Activated CD8-positive, alpha-beta T cell treated with anti-CD3 and anti-CD28 coated beads, Interleukin-2, amount 10 ng/mL, durations not matched to agents 7 days and 5 days (primary cell): ENCODE measurements at regions of chr5 and their contacts with region 1.

Region 1: DNA sequence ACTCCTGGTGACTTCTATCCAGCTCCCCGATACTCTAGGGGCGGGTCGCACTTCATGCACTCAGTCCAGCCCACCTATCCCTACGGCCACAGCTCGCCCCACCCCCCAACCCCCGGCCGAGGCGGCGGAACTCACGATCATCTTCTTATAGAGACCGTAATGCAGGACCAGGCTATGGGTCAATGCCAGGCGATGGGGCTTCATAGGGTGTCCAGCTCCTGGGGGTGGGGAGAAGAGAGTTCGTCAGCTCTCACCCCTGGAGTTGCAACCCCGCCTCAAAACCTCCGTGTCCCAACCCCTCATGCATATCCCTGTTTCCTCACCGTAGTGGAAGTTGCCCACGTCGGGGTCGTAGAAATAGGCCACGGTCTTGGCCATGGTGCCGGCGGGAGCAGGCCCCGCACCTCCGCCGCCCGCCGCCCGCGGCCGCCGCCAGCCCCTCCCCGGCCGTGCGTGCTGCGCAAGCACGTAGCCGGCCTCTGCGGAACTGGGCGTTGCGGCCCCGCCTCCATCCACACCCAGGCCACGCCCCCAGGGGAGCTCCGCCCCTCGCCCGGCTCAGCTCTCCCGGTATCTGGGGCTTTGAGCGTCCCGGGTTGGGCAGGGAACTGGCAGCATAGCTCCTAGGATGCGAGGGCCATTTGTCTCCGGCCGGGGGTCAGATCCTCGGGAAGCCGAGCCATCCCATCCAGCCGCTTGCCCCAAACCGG is at the starts of genes HDAC3 and RELL2:
- DNase-seq: peak; percentile 94
- ATAC-seq: peak; percentile 79
- H3K4me3 Mint-ChIP-seq: peak within 1 kb of the TSS; percentile 93
- H3K27ac Mint-ChIP-seq: peak within 1 kb of the TSS; percentile 90
- H3K4me1 Mint-ChIP-seq: peaks cover 56% of the 10 kb centered on the region
- H3K27me3 Mint-ChIP-seq: no peaks in the 10 kb centered on the region
- total RNA-seq, gene HDAC3: 88.1 to 91.8 TPM
- total RNA-seq, gene RELL2: 36.9 to 37.1 TPM

Region 2: DNA sequence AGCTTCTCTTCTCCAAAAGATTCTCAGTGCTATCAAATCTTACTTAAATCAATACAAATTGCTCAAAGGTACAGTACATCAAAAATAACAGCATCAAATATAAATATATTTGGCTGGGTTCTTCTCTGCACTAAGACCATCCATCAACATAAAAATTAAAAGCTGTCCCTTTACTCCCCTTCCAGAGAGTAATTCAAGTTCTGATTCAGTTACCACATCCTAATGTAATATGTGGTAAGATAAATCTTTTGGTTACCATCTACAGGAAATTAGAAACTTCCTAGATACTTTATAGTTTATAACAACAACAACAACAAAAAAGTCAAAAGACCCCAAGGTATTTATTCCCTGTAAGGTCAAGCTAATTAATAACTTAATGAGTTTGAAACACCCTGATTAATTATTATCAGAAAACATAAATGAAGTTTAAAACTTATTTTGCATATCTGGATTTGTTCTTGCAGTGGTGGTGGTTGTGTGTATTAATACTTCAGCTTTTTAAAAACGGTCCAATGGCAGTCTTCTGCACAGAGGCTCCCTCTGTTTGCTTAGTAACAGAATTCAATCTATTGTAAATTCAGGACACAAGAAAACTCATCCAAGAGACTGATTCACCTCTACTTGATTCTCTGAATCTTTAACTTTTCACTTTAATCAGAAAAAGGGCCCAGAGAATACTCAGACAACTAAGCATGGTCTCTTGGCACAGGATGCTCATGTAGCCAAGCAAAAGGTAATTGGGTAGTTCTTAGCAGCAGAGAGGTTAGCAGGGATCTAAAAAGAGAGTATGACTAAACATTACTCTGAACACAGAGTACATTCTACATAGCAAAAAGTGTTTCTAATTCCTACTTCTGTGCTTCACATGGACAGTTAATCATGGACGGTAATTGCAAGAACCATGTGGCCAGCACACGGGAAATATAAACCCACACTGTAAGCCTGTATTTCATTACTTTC is 37.9 kb before region 1 on chr5:
- CTCF ChIA-PET with region 1: interaction called, 159 read pairs
- POLR2A ChIA-PET with region 1: interaction called, 3 read pairs
- DNase-seq: no peak
- ATAC-seq: peak; percentile 57
- H3K4me3 Mint-ChIP-seq: no peak overlapping the region
- H3K27ac Mint-ChIP-seq: peak overlapping the region; percentile 65
- H3K4me1 Mint-ChIP-seq: peaks cover 72% of the 10 kb centered on the region
- H3K27me3 Mint-ChIP-seq: no peaks in the 10 kb centered on the region

Region 3: DNA sequence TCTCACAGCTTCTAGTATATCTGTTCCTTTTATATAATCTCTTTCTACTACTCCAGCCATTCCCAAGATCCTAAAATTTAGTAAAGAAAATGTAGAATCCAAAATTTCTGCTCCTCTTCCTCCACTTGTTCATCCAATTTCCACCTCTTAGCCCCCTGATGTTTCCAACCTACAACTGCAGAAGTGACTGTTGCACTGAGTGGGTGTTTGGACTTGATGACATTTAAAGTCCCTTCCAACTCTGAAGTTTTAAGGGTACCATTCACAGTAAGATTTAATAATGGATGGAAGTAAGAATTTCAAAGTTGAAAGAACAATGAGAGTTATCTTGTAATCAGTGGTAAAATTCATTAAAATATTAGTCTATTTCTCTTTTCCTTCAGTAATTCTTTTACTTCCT is 23.2 kb before region 1 on chr5:
- CTCF ChIA-PET with region 1: interaction called, 206 read pairs
- POLR2A ChIA-PET with region 1: interaction called, 39 read pairs
- DNase-seq: no peak
- ATAC-seq: no peak
- H3K4me3 Mint-ChIP-seq: peak overlapping the region; percentile 12
- H3K27ac Mint-ChIP-seq: no peak overlapping the region
- H3K4me1 Mint-ChIP-seq: peaks cover 71% of the 10 kb centered on the region
- H3K27me3 Mint-ChIP-seq: no peaks in the 10 kb centered on the region

Region 4: DNA sequence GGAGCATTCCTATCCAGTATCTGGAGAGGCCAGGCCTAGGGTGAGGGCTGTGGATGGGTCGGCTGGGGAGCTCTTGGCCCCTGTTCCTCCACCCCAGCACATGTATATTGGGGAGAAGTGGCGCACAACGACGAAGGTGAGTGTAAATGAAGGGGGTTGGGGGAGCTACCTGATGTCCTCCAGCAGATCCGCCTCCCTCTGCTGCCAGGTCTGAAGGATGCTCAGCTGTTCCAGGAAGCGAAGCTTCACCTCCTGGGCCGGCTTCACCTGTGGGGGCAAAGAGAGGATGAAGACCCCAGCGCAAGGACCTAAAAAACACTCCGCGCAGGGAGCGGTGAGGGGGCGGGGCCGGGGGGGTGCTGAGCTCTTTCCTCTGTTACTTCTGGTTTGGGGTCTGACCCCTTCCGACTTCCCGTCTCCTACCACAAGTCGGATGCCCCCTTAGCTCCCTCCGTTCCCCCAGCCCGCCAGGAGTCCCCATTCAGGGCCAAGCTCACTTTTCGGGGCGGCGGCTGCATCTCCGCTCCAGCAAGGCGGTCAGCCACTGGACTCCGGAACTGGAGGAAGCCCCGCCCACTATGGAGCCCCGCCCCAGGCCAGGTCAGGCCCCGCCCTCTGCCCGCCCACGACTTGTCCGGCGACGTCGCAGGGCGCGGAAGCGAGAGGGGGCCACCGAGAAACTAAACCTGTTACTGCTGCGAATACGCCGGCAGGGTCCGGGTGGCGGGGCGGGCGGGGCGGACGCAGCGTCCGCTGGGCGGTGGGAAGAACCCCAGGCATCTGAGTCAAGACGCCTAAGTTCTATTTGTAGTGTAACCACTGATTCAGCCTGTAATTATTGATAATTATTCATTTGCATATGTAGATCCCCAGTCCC is 14.5 kb after region 1 on chr5 and contains the start of gene FCHSD1:
- CTCF ChIA-PET with region 1: interaction called, 21 read pairs
- POLR2A ChIA-PET with region 1: interaction called, 39 read pairs
- DNase-seq: peak; percentile 91
- ATAC-seq: peak; percentile 95
- H3K4me3 Mint-ChIP-seq: peak within 1 kb of the TSS; percentile 95
- H3K27ac Mint-ChIP-seq: peak within 1 kb of the TSS; percentile 95
- H3K4me1 Mint-ChIP-seq: peaks cover 45% of the 10 kb centered on the region
- H3K27me3 Mint-ChIP-seq: no peaks in the 10 kb centered on the region
- total RNA-seq, gene FCHSD1: 46.9 to 47.8 TPM

Region 5: DNA sequence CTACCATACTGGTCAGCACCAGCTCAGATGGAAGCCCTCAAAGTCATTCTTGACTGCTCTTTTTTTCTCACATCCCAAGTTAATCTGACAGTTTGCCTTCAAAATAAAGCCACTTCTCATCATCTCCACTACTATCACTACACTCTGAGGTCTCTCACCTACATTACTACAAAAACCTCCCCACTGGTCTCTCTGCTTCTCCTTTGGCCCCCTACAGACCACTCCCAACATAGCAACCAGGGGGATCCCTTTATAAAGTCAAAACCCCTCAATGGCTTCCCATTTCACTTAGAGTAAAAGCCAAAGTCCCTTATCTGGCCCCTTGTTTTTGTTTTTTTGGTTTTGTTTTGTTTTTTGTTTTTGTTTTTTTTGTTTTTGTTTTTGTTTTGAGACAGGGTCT is 40.8 kb after region 1 on chr5:
- CTCF ChIA-PET with region 1: no interaction called
- POLR2A ChIA-PET with region 1: no interaction called
- DNase-seq: no peak
- ATAC-seq: no peak
- H3K4me3 Mint-ChIP-seq: no peak overlapping the region
- H3K27ac Mint-ChIP-seq: no peak overlapping the region
- H3K4me1 Mint-ChIP-seq: peaks cover 19% of the 10 kb centered on the region
- H3K27me3 Mint-ChIP-seq: no peaks in the 10 kb centered on the region

Region 6: DNA sequence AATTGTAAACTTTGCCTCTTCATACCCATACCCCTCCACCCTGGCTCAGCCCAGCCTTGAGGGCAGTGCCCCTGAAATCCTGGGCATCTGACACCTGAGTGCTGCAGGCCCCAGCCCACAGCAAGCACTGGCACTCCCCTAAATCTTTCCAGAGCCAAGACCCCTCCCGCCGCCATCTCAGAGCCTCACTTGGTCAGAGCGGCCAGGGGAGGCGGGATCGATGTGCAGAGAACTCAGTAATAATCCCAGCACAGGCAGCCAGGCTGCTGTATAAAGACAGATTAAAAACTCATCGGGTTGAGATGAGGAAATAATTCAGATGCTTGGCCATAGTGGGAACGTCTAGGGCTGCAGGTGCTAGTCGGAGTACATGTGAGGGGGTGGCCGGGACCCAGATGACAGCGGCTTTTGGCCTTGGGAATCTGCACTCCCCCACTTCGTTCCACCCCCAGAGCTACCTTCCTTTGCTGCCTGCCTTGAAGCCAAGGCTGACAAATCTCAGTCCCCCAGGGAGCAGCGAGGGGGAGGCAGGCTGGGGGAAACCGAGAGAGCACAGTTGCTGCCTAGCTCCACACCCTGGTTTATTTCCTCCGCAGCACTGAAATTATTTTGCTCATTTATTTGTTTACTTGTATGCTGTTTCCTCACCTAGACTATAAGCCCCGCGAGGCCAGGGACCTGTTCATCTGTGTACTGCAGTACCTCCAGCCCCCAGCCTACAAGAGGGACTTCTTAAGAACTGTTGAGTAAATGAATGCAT is 65.0 kb after region 1 on chr5:
- CTCF ChIA-PET with region 1: no interaction called
- POLR2A ChIA-PET with region 1: no interaction called
- DNase-seq: no peak
- ATAC-seq: peak; percentile 25
- H3K4me3 Mint-ChIP-seq: peak overlapping the region; percentile 71
- H3K27ac Mint-ChIP-seq: no peak overlapping the region
- H3K4me1 Mint-ChIP-seq: peaks cover 17% of the 10 kb centered on the region
- H3K27me3 Mint-ChIP-seq: peaks cover 46% of the 10 kb centered on the region